ENCODE measurements at regions of chr2 and their contacts with region 1.

Region 1: DNA sequence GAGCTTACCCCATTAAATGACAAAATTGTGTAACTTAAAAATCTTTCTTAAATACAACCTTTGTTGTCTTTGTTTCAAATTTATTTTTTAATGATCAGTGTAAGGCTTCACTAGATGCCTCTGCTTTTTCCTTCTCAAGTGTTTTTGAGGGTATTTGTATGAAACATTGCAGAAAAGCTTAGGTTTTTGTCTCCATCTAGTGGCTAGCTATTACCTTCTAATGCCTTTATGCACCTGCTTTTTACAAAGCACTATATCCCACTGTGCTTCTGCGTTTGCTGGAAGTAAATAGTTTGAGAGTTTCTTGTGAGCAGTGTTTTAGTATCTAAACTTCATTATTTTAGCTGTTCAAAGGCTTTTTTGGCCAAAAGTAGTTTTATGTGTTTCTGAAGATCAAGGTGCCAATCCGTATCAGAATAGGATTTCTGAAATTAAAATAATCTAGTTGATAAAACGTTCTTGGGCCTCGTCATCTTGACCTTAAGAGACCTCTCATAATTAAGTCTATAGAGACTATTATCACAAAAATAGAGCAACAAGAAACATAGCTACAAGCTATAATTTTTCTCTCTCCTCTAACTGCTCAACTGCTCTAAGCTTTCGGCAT is 47.0 kb downstream of the IWS1 start:
- DNase-seq: no peak
- H3K4me3 ChIP-seq: no peak overlapping the region
- CTCF ChIP-seq: peak; percentile 60

Region 2: GRCh38 chr2:127293748-127294562 is 185.4 kb before region 1 on chr2 and contains the start of gene ERCC3:
- CTCF ChIA-PET with region 1: interaction called, 21 read pairs
- POLR2A ChIA-PET with region 1: no interaction called
- DNase-seq: peak; percentile 4
- H3K4me3 ChIP-seq: peak within 1 kb of the TSS; percentile 96
- CTCF ChIP-seq: no peak

Region 3: GRCh38 chr2:127313406-127313805 is 165.9 kb before region 1 on chr2:
- CTCF ChIA-PET with region 1: interaction called, 18 read pairs
- POLR2A ChIA-PET with region 1: no interaction called
- DNase-seq: no peak
- H3K4me3 ChIP-seq: no peak overlapping the region
- CTCF ChIP-seq: no peak

Region 4: GRCh38 chr2:127330753-127331152 is 148.6 kb before region 1 on chr2:
- CTCF ChIA-PET with region 1: interaction called, 225 read pairs
- POLR2A ChIA-PET with region 1: no interaction called
- DNase-seq: no peak
- H3K4me3 ChIP-seq: no peak overlapping the region
- CTCF ChIP-seq: no peak

Region 5: DNA sequence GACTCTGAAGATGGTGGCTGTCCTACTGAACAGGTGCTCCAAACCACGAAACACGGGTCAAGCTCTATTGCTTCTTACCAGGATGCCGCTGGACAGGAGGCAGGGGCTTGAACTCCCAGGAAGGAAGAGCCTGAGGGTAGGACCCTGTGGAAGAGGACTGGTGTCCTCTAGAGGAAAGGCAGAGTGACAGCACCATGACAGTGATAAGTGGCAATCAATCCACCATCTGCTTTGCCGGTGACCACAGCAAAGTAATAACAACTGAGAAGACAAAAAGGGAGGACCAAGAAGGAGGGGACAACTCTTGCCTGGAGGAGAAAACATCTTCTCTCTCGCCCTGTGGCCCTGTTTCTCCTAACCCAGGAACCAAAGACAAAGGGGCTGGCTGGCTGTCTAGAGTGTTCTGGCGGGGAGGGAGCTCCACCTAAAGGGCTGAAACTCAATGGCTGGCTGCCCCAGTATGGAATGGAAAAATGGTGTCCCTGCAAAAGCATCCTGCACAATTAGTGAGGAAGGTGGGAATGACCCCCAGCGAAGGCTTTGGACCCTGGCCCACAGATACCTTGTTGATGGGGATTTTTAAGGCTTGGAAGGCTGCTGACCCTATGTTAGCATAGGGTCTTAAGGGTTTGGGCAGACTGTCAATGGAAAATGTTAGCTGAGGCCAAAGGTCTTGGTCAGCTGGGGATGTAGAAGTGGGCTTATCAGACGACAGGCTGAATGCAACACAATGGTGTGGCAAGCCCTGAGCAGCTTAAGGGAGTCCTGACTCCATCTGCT is 25.7 kb before region 1 on chr2:
- CTCF ChIA-PET with region 1: interaction called, 23 read pairs
- POLR2A ChIA-PET with region 1: no interaction called
- DNase-seq: no peak
- H3K4me3 ChIP-seq: no peak overlapping the region
- CTCF ChIP-seq: peak; percentile 11

Region 6: GRCh38 chr2:127490283-127490682 is 11.0 kb after region 1 on chr2:
- CTCF ChIA-PET with region 1: interaction called, 46 read pairs
- POLR2A ChIA-PET with region 1: no interaction called
- DNase-seq: no peak
- H3K4me3 ChIP-seq: no peak overlapping the region
- CTCF ChIP-seq: no peak

Measured in AG04449 (cell line).